H1 (cell line): ENCODE measurements at regions of chr14 and their contacts with region 1.

Region 1: GRCh38 chr14:36655963-36656686 is 5.5 kb upstream of the PAX9 start:
- DNase-seq: peak in 1 of 2 experiments; percentile 91
- H3K4me3 ChIP-seq: peak overlapping the region; percentile 8 to 53 (median 20); a peak in 5 of 8 replicates
- H3K27ac ChIP-seq: no peak overlapping the region
- H3K4me1 ChIP-seq: peaks cover 0 to 25% (median 13%) of the 10 kb centered on the region in 4 experiments; a peak in 5 of 7 replicates
- H3K27me3 ChIP-seq: peaks cover 95 to 100% (median 98%) of the 10 kb centered on the region in 4 experiments
- CTCF ChIP-seq: peak in 2 of 3 experiments; percentile 62 to 80; a peak in 3 of 4 replicates
- EP300 ChIP-seq: no peak
- POLR2A ChIP-seq: no peak
- RAD21 ChIP-seq: peak; percentile 35 to 58

Region 2: DNA sequence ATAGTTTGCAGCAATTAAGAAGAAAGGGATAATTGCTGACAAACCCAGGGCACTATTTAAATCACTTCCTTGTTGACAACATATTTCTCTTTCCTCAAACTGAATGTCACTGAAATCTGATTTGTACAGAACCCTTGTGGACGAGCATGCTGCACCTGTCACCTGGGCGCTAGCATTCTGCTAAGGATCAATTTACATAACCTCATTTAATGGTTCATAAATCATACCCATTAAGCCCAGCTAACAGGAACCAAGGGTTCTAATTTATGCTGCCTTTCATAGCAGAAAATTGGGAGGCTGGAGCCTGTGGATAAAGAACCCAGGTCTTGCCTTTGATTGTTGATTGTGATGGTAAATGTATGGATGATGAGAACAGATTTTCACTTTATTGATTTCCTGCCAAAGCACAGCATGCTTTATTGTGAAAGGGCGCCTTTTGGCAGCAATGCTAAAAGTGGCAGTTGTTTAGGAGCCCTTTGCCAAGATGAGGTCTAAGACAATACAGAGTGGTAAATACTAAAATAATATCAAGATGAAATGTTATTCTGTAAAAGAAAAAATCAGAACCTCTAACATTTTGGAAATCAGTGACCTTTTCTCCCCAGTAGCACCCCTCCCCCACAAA is 231.5 kb before region 1 on chr14:
- CTCF ChIA-PET with region 1: no interaction called
- POLR2A ChIA-PET with region 1: no interaction called
- DNase-seq: no peak
- H3K4me3 ChIP-seq: no peak overlapping the region
- H3K27ac ChIP-seq: no peak overlapping the region
- H3K4me1 ChIP-seq: peaks cover 0 to 6% (median 2%) of the 10 kb centered on the region in 4 experiments; a peak in 2 of 7 replicates
- H3K27me3 ChIP-seq: no peaks in the 10 kb centered on the region; a peak in 1 of 7 replicates
- CTCF ChIP-seq: no peak
- EP300 ChIP-seq: no peak
- POLR2A ChIP-seq: no peak
- RAD21 ChIP-seq: no peak

Region 3: GRCh38 chr14:36505181-36505815 is 150.8 kb before region 1 on chr14:
- CTCF ChIA-PET with region 1: interaction called, 18 read pairs
- POLR2A ChIA-PET with region 1: no interaction called
- DNase-seq: no peak
- H3K4me3 ChIP-seq: peak overlapping the region in 3 of 4 experiments; percentile 12 to 47 (median 26); a peak in 4 of 8 replicates
- H3K27ac ChIP-seq: no peak overlapping the region
- H3K4me1 ChIP-seq: peaks cover 10 to 22% (median 17%) of the 10 kb centered on the region in 4 experiments
- H3K27me3 ChIP-seq: peaks cover 78 to 100% (median 91%) of the 10 kb centered on the region in 4 experiments
- CTCF ChIP-seq: no peak
- EP300 ChIP-seq: no peak
- POLR2A ChIP-seq: no peak
- RAD21 ChIP-seq: no peak

Region 4: DNA sequence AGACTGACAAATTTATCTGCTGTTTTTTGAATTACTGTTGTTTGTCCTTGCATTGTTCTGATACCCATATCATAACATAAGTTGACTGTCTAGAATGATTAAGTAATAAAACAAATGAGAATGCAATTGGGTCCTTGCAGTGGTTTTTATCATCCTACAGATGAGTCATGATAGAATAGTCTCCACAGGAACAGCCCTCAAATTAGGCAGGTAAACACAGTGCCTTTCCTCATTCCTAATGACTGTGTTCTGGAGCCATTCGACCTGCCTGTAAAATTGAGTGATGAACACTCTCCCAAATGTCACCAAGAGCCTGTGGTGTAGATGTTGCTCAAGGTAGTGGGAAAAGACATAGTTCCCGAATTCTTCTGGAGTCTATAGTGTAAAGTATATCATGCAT is 86.1 kb before region 1 on chr14:
- CTCF ChIA-PET with region 1: no interaction called
- POLR2A ChIA-PET with region 1: no interaction called
- DNase-seq: no peak
- H3K4me3 ChIP-seq: no peak overlapping the region
- H3K27ac ChIP-seq: no peak overlapping the region
- H3K4me1 ChIP-seq: no peaks in the 10 kb centered on the region
- H3K27me3 ChIP-seq: peaks cover 5 to 15% (median 8%) of the 10 kb centered on the region in 4 experiments
- CTCF ChIP-seq: no peak
- EP300 ChIP-seq: no peak
- POLR2A ChIP-seq: no peak
- RAD21 ChIP-seq: no peak

Region 5: DNA sequence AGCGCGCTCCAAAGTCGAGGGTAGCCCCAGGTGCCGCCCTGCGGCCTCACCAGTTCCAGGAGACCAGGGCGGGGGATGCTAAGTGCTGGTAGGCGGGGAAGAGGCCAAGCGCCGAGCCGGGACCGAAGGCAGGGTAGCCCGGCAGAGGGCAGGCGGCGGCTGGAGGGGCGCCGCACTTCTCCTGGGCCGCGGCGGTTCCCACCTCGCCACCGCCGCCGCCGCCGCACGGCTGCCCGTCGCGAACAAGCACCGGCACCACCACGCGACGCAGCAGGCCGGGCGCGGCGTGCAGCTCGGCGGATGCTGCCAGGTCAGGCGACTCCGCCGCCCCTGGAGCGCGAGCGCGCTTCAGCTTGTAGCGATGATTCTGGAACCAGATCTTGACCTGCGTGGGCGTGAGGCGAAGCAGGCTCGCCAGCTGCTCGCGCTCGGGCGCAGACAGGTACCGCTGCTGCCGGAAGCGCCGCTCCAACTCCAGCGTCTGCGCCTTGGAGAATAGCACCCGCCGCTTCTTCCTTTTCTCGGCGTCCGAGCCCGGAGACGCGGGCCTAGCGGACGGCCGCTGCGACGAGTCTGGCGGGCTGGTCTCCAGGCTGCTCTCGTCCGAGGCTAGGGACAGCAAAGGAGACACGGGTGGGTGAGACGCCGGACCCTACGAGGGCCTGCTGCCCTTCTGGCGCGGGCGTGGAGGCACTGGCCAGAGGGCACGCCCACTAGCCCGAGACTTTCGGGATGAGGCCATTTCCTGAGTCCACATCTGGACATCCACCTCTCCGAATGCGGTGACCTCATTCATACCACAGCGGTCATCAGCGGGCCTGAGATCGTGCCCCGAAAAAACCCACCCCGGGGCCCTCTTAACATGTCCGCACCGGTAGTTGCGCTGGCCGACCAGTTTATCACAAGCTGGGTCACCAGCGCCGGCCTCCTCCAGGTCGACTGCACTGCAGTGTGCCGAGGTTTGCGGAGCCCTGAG is 75.0 kb before region 1 on chr14:
- CTCF ChIA-PET with region 1: interaction called, 29 read pairs
- POLR2A ChIA-PET with region 1: interaction called, 4 read pairs
- DNase-seq: peak in 1 of 2 experiments; percentile 74
- H3K4me3 ChIP-seq: peak overlapping the region in 3 of 4 experiments; percentile 19 to 58 (median 26); a peak in 7 of 8 replicates
- H3K27ac ChIP-seq: no peak overlapping the region
- H3K4me1 ChIP-seq: peaks cover 0 to 21% (median 11%) of the 10 kb centered on the region in 4 experiments; a peak in 5 of 7 replicates
- H3K27me3 ChIP-seq: peaks cover 95 to 100% (median 97%) of the 10 kb centered on the region in 4 experiments
- CTCF ChIP-seq: 0 out of 4 replicates have a peak, but pooled peaks of 1 of the 3 experiments have one; percentile 2
- EP300 ChIP-seq: no peak
- POLR2A ChIP-seq: no peak
- RAD21 ChIP-seq: no peak

Region 6: GRCh38 chr14:36591482-36591881 is 64.6 kb before region 1 on chr14:
- CTCF ChIA-PET with region 1: interaction called, 11 read pairs
- POLR2A ChIA-PET with region 1: interaction called, 4 read pairs
- DNase-seq: no peak
- H3K4me3 ChIP-seq: no peak overlapping the region
- H3K27ac ChIP-seq: no peak overlapping the region
- H3K4me1 ChIP-seq: peaks cover 0 to 5% (median 0%) of the 10 kb centered on the region in 4 experiments; a peak in 2 of 7 replicates
- H3K27me3 ChIP-seq: peaks cover 31 to 73% (median 58%) of the 10 kb centered on the region in 4 experiments
- CTCF ChIP-seq: no peak
- EP300 ChIP-seq: no peak
- POLR2A ChIP-seq: no peak
- RAD21 ChIP-seq: no peak

Region 7: DNA sequence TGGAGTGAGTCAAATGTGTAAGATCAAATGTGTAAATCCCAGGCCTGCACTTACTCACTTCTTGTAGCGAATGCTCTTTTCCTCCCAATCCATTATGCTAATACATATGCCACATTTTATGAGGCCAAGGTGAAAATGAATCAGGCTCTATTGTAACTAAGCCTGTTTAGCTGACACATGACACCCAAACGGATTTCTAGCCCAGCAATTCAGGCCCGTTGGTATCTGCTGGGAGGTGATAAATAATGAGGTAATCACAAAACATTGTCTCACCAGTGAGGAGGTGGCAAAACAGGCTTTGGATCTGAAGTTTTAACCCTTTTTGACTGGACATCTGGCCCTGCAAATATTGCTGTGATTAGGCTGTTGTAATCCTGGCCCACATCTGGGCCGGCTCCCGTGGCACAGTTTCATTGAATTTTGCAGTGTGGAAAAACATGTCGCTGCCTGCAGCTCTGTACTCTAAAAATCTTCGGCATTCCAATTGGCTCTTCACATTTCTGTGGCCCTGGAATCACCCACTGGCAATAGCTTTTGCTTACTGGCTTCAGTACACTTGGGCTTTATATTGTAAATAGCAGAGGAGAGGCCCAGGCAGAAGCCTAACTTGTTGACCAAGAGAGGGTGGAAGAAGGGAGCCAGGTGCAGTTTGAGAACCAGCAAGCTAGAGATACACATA is 111.6 kb after region 1 on chr14:
- CTCF ChIA-PET with region 1: interaction called, 10 read pairs
- POLR2A ChIA-PET with region 1: no interaction called
- DNase-seq: no peak
- H3K4me3 ChIP-seq: no peak overlapping the region
- H3K27ac ChIP-seq: peak overlapping the region; percentile 19; the same call in 1 of the 2 replicates
- H3K4me1 ChIP-seq: peaks cover 2 to 14% (median 5%) of the 10 kb centered on the region in 4 experiments; a peak in 6 of 7 replicates
- H3K27me3 ChIP-seq: no peaks in the 10 kb centered on the region
- CTCF ChIP-seq: no peak
- EP300 ChIP-seq: no peak
- POLR2A ChIP-seq: no peak
- RAD21 ChIP-seq: no peak